ENCODE measurements at regions of chr4 and their contacts with region 1.

Region 1: DNA sequence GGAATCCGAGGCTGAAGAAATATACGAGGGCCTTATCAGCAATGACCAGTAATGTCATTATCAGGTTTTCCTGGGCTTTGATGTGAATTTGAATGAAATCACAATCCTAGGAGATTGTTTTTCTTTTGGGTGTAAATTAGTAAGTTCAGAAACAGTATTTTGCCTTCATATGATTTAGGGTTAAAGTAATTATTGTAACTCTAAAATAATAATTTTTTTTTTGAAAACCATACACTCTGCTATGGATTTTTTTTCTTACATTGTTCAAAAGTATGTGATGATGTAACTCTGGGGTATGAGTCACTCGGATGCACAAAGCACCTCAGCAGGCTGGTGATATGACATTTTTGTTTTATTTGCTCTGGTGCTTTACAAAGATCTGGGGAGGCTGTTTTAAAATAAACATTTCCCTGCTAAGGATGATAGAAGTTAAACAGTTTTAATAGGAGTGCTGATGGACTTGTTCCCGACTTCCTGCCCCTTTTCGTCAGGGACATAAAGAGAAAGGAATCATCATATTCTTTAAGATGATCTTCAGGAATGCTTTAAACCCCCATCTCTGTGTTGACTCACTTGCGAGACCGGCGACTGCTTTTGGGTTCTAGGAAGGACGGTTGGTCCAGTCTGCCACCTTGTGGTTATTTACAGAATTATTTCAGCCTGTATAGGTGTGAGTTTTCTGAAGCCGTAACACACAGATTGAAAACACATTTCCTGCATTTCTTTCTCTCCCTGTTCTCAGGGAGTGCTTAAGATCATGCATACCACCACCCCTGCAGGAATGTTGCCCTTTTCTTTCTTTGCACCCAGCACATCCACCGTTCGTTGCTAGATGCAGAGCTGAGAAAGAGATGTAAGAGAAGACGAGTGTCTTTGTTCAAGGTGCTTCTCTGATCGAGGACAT is 72.5 kb downstream of the RAPGEF2 start:
- DNase-seq: peak; percentile 95
- H3K4me3 ChIP-seq: peak overlapping the region; percentile 16
- H3K27ac ChIP-seq: peak overlapping the region; percentile 5
- H3K4me1 ChIP-seq: peaks cover 45% of the 10 kb centered on the region
- H3K27me3 ChIP-seq: no peaks in the 10 kb centered on the region
- CTCF ChIP-seq: peak; percentile 95

Region 2: GRCh38 chr4:158729716-158730559 is 445.4 kb before region 1 on chr4:
- CTCF ChIA-PET with region 1: no interaction called
- POLR2A ChIA-PET with region 1: no interaction called
- intact Hi-C with region 1: loop called (anchors 1 kb)
- DNase-seq: peak; percentile 82
- H3K4me3 ChIP-seq: no peak overlapping the region
- H3K27ac ChIP-seq: no peak overlapping the region
- H3K4me1 ChIP-seq: no peaks in the 10 kb centered on the region
- H3K27me3 ChIP-seq: peaks cover 22% of the 10 kb centered on the region
- CTCF ChIP-seq: peak; percentile 90

Region 3: GRCh38 chr4:158856852-158857251 is 318.5 kb before region 1 on chr4:
- CTCF ChIA-PET with region 1: interaction called, 5 read pairs
- POLR2A ChIA-PET with region 1: no interaction called
- intact Hi-C with region 1: loop called (anchors 1 kb)
- DNase-seq: peak; percentile 78
- H3K4me3 ChIP-seq: no peak overlapping the region
- H3K27ac ChIP-seq: no peak overlapping the region
- H3K4me1 ChIP-seq: peaks cover 4% of the 10 kb centered on the region
- H3K27me3 ChIP-seq: no peaks in the 10 kb centered on the region
- CTCF ChIP-seq: peak; percentile 87

Region 4: GRCh38 chr4:158996669-158997074 is 178.7 kb before region 1 on chr4:
- CTCF ChIA-PET with region 1: no interaction called
- POLR2A ChIA-PET with region 1: interaction called, 3 read pairs
- intact Hi-C with region 1: loop called (anchors 5 kb)
- DNase-seq: peak; percentile 91
- H3K4me3 ChIP-seq: no peak overlapping the region
- H3K27ac ChIP-seq: no peak overlapping the region
- H3K4me1 ChIP-seq: peaks cover 10% of the 10 kb centered on the region
- H3K27me3 ChIP-seq: no peaks in the 10 kb centered on the region
- CTCF ChIP-seq: no peak

Region 5: GRCh38 chr4:159024266-159024665 is 151.1 kb before region 1 on chr4:
- CTCF ChIA-PET with region 1: no interaction called
- POLR2A ChIA-PET with region 1: no interaction called
- intact Hi-C with region 1: loop called (anchors 5 kb)
- DNase-seq: peak; percentile 47
- H3K4me3 ChIP-seq: no peak overlapping the region
- H3K27ac ChIP-seq: no peak overlapping the region
- H3K4me1 ChIP-seq: peaks cover 28% of the 10 kb centered on the region
- H3K27me3 ChIP-seq: no peaks in the 10 kb centered on the region
- CTCF ChIP-seq: no peak

Region 6: DNA sequence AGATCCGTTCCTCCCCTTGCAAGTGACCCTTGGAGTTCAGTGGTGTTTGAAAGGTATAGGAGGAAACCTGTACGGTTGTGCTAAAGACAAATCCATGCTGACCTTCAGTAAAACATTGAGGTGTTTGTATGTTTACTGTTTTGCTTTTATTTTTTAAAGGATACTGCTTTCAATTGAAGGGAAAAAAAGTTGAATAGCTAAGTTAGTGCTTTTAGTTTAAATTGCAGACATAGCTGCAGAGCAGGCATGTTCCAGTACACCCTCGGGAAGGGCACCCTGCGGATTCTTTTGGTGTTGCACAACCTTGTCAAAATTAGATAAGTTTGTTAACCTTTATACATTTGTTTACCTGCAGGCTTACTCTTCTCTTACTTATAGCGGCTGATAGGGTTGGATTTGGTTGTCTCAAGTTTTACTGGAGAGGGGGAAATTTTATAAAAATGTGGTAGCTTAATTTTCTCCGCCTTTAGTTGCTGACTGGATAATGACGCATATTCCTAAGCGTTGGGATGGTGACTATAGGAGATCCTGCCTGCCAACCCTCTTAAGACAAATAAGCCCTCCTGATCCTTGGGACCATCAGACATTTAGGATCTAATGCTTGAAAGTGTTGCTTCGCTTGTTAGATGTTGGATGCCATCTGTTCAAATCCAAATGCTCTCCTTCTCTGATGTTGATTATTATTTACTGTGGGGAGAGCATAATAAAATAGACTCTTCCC is 70.5 kb before region 1 on chr4:
- CTCF ChIA-PET with region 1: no interaction called
- POLR2A ChIA-PET with region 1: no interaction called
- intact Hi-C with region 1: loop called (anchors 1 kb)
- DNase-seq: peak; percentile 57
- H3K4me3 ChIP-seq: peak overlapping the region; percentile 93
- H3K27ac ChIP-seq: peak overlapping the region; percentile 39
- H3K4me1 ChIP-seq: peaks cover 41% of the 10 kb centered on the region
- H3K27me3 ChIP-seq: peaks cover 3% of the 10 kb centered on the region
- CTCF ChIP-seq: no peak; the same call in 1 of the 2 replicates

Measured in A673 (cell line).